ENCODE measurements at regions of chr17 and their contacts with region 1.

Region 1: GRCh38 chr17:79866791-79867518 is 27.7 kb upstream of the CBX4 start:
- DNase-seq: no peak
- H3K4me3 ChIP-seq: no peak overlapping the region
- H3K27ac ChIP-seq: no peak overlapping the region
- H3K4me1 ChIP-seq: no peaks in the 10 kb centered on the region
- H3K27me3 ChIP-seq: no peaks in the 10 kb centered on the region
- CTCF ChIP-seq: no peak
- POLR2A ChIP-seq: no peak

Region 2: DNA sequence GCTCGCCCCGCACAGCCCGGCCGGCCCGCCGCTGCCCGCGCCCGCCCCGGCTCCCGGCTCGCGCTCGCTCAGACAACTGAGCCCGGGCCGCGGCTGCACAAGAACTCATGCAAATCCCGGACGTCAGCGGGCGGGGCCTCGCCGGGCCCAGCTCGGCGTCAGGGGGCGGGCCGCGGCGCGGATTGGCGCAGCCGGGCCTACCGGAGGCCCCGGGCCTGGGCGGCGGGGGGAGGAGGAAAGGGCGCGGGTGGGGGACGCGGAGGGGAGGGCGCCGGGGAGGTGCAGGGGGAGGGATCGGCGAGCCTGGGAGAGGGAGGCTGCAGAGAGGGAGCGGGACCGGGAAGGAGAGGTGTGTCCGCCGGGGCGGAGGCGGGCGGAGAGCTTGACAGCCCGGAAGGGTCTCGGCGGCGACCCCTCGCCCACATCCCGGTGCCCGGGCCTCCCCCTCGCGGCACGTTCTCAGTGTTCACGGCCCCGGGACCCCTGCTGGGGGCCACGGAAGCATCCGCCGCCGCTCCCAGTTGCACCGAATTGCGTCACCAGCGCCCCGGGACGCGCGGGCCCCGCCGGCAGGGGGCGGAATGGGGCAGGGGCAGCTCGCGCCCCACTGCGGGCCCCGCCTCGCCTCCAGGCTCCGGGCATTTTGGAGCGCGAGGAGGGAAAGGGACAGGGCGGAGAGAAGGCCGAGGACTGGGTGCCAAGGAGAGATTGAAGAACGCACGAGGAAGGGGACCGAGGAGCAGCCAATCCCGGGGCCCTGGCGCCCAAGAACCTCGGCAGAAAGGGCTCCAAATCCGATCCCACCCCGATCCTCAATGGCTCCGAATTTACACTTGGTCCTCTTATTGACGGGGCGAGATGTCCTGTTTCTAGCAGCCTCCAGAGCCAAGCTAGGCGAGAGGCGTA is 27.3 kb before region 1 on chr17 and contains the start of gene CBX4:
- intact Hi-C with region 1: no loop called
- DNase-seq: peak in 1 of 2 donors; percentile 95
- H3K4me3 ChIP-seq: peak within 1 kb of the TSS; percentile 72 to 75
- H3K27ac ChIP-seq: peak within 1 kb of the TSS; percentile 93
- H3K4me1 ChIP-seq: peaks cover 76% of the 10 kb centered on the region
- H3K27me3 ChIP-seq: peaks cover 12% of the 10 kb centered on the region
- CTCF ChIP-seq: peak in 2 of 3 experiments; percentile 39 to 42
- POLR2A ChIP-seq: peak in 1 of 2 donors; percentile 77
- total RNA-seq, gene CBX4: 13.0 TPM

Region 3: DNA sequence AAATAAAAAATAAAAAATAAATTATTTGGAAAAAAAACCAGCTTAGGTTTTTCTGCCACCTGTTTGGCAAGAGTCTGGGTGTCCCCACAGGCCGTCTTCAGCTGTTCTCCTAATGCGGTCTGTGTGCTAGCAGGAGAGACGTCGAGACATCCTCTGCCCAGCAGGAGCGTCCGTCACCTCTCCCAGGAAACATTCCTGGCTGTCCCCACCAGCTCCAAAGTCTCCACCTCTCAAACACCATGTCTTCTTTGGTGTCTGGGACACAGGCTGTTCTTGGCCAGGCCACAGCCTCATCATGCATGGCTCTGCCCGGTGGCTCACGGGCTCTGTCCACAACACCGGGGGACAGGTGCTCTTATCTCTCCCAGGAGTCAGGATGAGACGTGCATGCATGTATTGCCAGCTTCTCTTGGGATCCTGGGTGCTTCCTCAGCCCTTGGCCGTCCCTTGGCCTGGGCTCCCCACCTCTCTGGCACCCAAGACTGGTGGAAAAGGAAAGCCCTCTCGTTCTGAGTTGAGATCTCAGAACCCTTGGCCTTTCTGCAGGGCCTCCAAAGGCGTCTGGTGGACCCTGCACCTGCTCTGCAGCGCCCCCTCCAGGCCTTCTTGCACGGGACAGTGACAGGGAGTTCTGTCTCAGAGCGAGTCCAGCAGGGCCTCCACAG is 57.2 kb after region 1 on chr17:
- intact Hi-C with region 1: loop called (anchors 5 kb)
- DNase-seq: no peak
- H3K4me3 ChIP-seq: no peak overlapping the region
- H3K27ac ChIP-seq: no peak overlapping the region
- H3K4me1 ChIP-seq: peaks cover 32% of the 10 kb centered on the region
- H3K27me3 ChIP-seq: peaks cover 7% of the 10 kb centered on the region
- CTCF ChIP-seq: no peak
- POLR2A ChIP-seq: no peak

Measured in vagina (tissue), 2 donors.